Esophagus muscularis mucosa (tissue), 4 donors: ENCODE measurements at regions of chr11 and their contacts with region 1.

Region 1: DNA sequence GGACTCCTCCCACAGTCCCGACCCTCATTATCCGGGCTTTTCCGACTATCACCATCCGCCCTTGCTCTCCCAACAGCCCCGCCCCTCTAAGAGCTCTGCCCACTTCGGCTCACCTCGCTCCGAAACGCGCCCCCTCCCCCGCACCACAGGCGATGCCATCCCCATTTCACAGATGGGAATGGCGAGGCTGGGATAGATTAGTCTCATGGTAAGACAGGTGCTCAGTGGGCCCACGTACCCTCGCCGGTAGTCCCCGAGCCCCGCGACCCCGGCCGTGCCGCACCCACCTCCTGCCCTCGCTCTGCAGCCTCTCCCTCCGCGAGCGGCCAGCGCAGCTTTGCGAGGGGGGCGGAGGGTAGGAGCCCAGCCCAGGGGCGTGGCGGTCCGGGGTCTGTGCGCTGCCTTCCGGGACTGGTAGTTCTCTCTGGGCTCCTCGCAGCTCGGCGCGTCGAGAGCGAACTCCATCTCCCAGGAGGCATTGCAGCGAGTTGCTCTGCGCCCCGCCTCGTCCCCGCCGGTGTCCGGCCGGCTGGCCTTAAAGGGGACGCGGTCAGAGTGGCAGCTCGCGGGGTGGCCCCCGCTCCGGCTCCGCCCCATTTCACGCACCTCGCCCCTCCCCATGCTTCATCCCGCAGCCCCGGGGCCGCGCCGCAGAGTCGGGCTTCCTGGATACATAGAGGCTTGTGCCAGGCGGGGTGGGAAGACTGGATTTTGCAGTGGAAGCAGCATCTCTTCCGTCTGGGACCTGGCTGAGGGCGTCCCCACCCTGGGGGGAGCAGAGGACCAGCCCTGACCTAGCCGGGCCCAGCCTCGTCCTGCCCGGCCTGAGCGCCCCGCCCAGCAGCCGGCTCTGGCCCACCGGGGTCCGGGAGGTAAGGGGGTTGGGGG is at the starts of genes KCTD21 and USP35:
- DNase-seq: peak; percentile 99
- H3K4me3 ChIP-seq: peak within 1 kb of the TSS; percentile 75 to 94 (median 82)
- H3K27ac ChIP-seq: peak within 1 kb of the TSS; percentile 80 to 89 (median 86)
- H3K4me1 ChIP-seq: peaks cover 25 to 68% (median 61%) of the 10 kb centered on the region in 4 donors
- H3K27me3 ChIP-seq: no peaks in the 10 kb centered on the region
- CTCF ChIP-seq: no peak
- EP300 ChIP-seq: no peak
- POLR2A ChIP-seq: peak; percentile 74
- total RNA-seq, gene KCTD21: 6.6 to 21.0 (median 12.1) TPM
- total RNA-seq, gene USP35: 5.8 to 15.4 (median 11.3) TPM

Region 2: GRCh38 chr11:78149646-78150045 is 38.9 kb before region 1 on chr11:
- intact Hi-C with region 1: loop called (anchors 5 kb)
- DNase-seq: no peak
- H3K4me3 ChIP-seq: no peak overlapping the region
- H3K27ac ChIP-seq: no peak overlapping the region
- H3K4me1 ChIP-seq: peaks cover 0 to 10% (median 6%) of the 10 kb centered on the region in 4 donors
- H3K27me3 ChIP-seq: no peaks in the 10 kb centered on the region
- CTCF ChIP-seq: peak; percentile 39 to 55 (median 43)
- EP300 ChIP-seq: no peak
- POLR2A ChIP-seq: no peak

Region 3: DNA sequence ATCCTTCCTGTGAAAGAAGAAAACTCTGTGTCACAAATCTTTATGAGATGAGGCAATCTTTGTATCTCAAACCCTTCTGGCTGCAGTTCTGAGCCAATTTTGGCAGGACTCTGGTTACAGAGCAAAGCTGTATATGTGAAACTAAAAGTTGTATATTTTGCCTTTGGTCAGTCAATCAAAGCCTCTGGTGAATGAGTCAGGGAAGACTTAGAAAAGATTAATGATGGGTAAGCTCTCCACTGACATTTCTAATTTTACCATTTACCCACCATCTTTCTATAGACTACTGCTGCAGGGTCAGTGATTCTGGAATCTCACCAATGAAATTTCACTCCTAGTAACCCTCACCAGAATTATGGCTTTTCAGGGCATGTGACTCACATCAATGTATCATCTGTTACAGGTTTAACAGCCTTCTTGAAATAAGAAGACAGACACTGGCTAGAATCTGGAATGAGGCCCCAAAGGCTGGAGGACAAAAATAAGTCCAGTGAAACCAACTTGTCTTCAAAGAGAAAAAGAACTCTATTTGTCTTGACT is 43.5 kb after region 1 on chr11:
- intact Hi-C with region 1: no loop called
- DNase-seq: peak; percentile 75
- H3K4me3 ChIP-seq: no peak overlapping the region
- H3K27ac ChIP-seq: peak overlapping the region in 3 of 4 donors; percentile 5 to 16 (median 11)
- H3K4me1 ChIP-seq: peaks cover 14 to 41% (median 32%) of the 10 kb centered on the region in 4 donors
- H3K27me3 ChIP-seq: no peaks in the 10 kb centered on the region
- CTCF ChIP-seq: no peak
- EP300 ChIP-seq: no peak
- POLR2A ChIP-seq: no peak